ENCODE measurements at regions of chr18 and their contacts with region 1.

Region 1: GRCh38 chr18:11387880-11388279 is 221.5 kb upstream of the SLC35G4 start:
- DNase-seq: peak; percentile 75 to 88 (median 85)
- ATAC-seq: peak; percentile 54 to 78
- H3K4me3 ChIP-seq: no peak overlapping the region
- H3K27ac ChIP-seq: no peak overlapping the region
- H3K4me1 ChIP-seq: no peaks in the 10 kb centered on the region
- H3K27me3 ChIP-seq: no peaks in the 10 kb centered on the region

Region 2: GRCh38 chr18:11154368-11154989 is 233.4 kb before region 1 on chr18:
- intact Hi-C with region 1: no loop called
- DNase-seq: no peak
- ATAC-seq: peak in 1 of 2 donors; percentile 26
- H3K4me3 ChIP-seq: no peak overlapping the region
- H3K27ac ChIP-seq: no peak overlapping the region
- H3K4me1 ChIP-seq: no peaks in the 10 kb centered on the region
- H3K27me3 ChIP-seq: no peaks in the 10 kb centered on the region

Region 3: DNA sequence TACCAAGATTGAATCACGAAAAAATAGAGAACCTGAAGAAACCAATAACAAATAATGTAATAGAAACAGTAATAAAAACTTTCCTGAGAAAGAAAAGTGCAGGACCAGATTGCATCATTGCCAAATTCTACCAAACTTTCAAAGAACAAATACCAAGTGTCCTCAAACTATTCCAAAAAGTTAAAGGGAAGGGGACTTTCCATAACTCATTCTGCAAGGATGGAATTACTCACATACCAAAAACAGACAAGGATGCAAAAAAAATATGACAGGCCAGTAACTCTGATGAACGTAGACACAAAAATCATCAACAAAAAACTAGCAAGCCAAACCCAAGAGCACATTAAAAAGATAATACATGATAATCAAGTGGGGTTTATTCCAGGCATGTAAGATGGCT is 49.2 kb after region 1 on chr18:
- intact Hi-C with region 1: loop called in 1 of 4 experiments (anchors 10 kb)
- DNase-seq: no peak
- ATAC-seq: no peak
- H3K4me3 ChIP-seq: no peak overlapping the region
- H3K27ac ChIP-seq: no peak overlapping the region
- H3K4me1 ChIP-seq: no peaks in the 10 kb centered on the region
- H3K27me3 ChIP-seq: no peaks in the 10 kb centered on the region

Region 4: DNA sequence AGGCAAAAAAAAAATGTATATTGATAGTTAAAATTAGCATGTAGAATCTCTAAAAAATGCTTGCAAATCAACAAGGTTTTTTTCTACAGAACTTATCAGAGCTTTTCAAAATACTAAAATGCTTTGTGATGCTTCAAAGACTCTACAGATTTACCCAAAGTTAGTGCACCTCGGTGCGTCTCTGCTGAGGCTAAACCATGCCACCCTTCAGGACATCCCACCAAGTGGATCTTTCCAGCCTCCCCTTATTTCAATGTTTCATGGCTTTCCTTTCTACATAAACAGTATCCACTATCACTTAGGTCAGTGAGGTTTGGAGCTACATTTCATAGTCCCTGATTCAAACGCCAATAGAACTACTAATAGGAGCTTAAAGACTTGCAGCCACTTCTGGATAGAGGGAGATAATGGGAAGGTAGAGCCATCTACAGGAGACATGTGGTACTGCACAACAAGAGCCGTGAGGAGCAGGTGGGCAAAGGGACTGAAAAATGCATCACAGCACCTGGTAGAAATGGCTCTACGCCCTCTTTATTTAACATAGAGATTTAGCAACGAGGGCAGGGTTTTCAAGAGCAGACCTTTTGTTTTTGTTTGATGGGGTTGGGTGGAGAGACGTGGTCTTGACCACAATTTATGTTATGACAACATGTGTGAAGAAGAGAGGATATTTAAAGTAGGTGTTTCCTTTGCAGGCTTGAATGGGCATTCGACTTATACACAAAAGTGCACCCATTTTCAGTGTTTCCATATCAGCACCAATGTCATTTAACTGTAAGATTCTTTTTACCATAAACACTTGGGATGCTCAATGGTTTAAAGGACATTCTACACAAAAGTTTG is 165.4 kb after region 1 on chr18:
- intact Hi-C with region 1: no loop called
- DNase-seq: no peak
- ATAC-seq: peak; percentile 53 to 60
- H3K4me3 ChIP-seq: no peak overlapping the region
- H3K27ac ChIP-seq: no peak overlapping the region
- H3K4me1 ChIP-seq: no peaks in the 10 kb centered on the region
- H3K27me3 ChIP-seq: no peaks in the 10 kb centered on the region